ENCODE measurements at regions of chr11 and their contacts with region 1.

Region 1: DNA sequence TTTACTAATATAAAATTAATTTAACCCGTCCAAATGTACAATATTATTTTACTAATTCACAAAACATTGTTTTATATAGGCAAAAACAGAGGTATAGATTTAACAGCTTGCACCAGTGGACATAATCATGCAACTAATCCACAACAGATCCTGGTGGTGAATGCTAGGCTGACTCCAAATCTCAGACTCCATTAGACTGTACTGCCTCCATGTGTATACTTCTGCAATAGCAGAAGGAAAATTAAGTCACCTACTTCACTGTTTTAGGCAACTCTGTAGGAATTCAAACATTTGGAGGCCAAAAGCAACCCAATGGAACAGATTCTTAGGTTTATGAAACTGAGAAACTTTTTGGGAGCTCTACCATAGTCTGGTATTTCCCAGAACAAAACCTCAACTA is 30.0 kb upstream of the RAB39A start:
- DNase-seq: peak; percentile 36
- ATAC-seq: peak; percentile 94
- H3K4me3 ChIP-seq: no peak overlapping the region
- H3K27ac ChIP-seq: no peak overlapping the region
- H3K4me1 ChIP-seq: no peaks in the 10 kb centered on the region
- H3K27me3 ChIP-seq: no peaks in the 10 kb centered on the region
- CTCF ChIP-seq: peak; percentile 62 to 77 (median 71); a peak in 5 of 6 replicates
- POLR2A ChIP-seq: no peak
- RAD21 ChIP-seq: peak; percentile 89

Region 2: GRCh38 chr11:107741044-107741823 is 157.0 kb before region 1 on chr11:
- CTCF ChIA-PET with region 1: no interaction called
- POLR2A ChIA-PET with region 1: no interaction called
- RAD21 ChIA-PET with region 1: interaction called in 1 of 2 experiments, 5 read pairs
- intact Hi-C with region 1: loop called (anchors 1 kb)
- DNase-seq: peak; percentile 22
- ATAC-seq: peak; percentile 89
- H3K4me3 ChIP-seq: no peak overlapping the region
- H3K27ac ChIP-seq: no peak overlapping the region
- H3K4me1 ChIP-seq: no peaks in the 10 kb centered on the region
- H3K27me3 ChIP-seq: no peaks in the 10 kb centered on the region
- CTCF ChIP-seq: peak; percentile 46 to 70 (median 55); a peak in 4 of 6 replicates
- POLR2A ChIP-seq: no peak
- RAD21 ChIP-seq: peak; percentile 57

Region 3: DNA sequence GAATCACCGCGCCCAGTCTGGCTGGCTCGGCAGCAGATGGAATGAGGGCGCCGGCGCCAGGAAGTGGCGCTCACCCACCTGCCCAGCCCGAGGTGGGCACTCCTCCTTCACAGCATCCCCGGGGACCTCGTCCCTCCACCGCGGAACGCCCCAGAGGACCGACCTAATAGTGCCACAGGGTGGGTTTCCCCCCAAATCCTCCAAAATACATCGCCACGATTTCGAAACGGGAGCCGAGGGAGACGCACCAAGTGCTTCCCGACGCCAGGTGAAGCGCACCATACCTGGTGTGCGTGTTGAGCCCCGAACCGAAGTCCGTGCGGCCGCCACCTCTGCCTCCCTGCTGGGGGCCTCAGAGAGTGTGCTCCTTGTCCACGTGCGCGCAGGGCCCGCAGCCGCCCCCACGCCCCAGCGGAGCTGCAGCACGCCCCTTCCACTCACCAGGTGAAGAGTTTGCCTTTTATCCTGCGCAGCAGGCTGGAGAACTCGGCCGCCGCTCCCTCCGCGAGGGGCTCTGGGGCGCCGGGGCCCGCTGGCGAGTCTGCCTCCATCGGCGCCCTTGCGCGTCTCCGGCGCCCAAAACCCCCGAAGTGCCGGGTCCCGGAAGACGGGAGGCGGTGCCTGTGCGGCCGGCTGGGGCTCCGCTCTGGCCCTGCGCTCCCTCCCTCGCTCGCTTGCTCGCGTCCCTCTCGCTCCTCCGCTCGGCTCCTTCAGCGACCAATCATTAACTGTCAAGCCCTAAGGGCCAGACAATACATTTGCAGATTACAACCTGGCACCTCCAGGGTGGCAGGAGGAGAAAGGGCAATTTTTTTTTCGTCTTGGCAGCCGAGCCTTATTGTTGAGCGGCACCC is 39.8 kb before region 1 on chr11 and contains the start of gene SLC35F2:
- CTCF ChIA-PET with region 1: no interaction called
- POLR2A ChIA-PET with region 1: no interaction called
- RAD21 ChIA-PET with region 1: no interaction called
- intact Hi-C with region 1: loop called (anchors 1 kb)
- DNase-seq: peak; percentile 73
- ATAC-seq: peak; percentile 81
- H3K4me3 ChIP-seq: peak within 1 kb of the TSS; percentile 54 to 97
- H3K27ac ChIP-seq: peak within 1 kb of the TSS; percentile 90
- H3K4me1 ChIP-seq: peaks cover 3 to 37% of the 10 kb centered on the region in 2 experiments; a peak in 3 of 4 replicates
- H3K27me3 ChIP-seq: no peaks in the 10 kb centered on the region
- CTCF ChIP-seq: 0 out of 6 replicates have a peak, but pooled peaks of 1 of the 3 experiments have one; percentile 0
- POLR2A ChIP-seq: peak; percentile 69
- RAD21 ChIP-seq: 0 out of 2 replicates have a peak, but pooled peaks have one; percentile 10
- total RNA-seq, gene SLC35F2: 53.5 TPM